ENCODE measurements at regions of chr1 and their contacts with region 1.

Region 1: DNA sequence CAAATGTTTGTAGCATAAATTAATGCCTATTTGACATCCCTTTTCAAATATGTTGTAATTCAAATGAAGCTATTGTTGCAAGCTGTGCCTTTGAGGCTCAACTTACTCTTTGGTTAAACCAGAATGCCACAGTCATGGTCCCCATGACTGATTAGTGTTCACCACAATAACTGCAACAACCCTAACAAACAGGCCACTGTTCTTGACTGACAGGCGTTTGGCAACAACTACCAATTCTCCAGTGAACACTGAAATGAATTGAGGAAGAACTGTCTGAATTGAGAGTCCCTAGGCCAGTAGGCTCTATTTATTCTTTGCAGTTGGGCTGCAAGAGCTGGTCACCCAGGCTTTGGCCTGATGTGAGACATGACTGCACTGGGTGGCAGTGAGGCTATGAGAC is 6.6 kb upstream of the TMEM167B start:
- DNase-seq: peak in 8 of 10 donors; percentile 36 to 86 (median 54)
- H3K4me3 ChIP-seq: peak overlapping the region in 3 of 59 donors; percentile 8 to 17 (median 10)
- H3K27ac ChIP-seq: peak overlapping the region; percentile 24 to 96 (median 90)
- H3K27me3 ChIP-seq: no peaks in the 10 kb centered on the region
- CTCF ChIP-seq: peak in 17 of 56 donors; percentile 7 to 52 (median 22)

Region 2: GRCh38 chr1:108963052-108963686 is 120.8 kb before region 1 on chr1 and contains the start of gene CLCC1:
- intact Hi-C with region 1: loop called in 1 of 2 experiments (anchors 5 kb)
- DNase-seq: peak; percentile 86 to 95 (median 93)
- H3K4me3 ChIP-seq: peak within 1 kb of the TSS; percentile 55 to 98 (median 86)
- H3K27ac ChIP-seq: peak within 1 kb of the TSS; percentile 26 to 98 (median 91)
- H3K27me3 ChIP-seq: no peaks in the 10 kb centered on the region
- CTCF ChIP-seq: peak in 20 of 56 donors; percentile 5 to 48 (median 16)
- total RNA-seq, gene CLCC1: 30.4 to 58.6 (median 44.3) TPM